Spleen (tissue), 13 donors: ENCODE measurements at regions of chr10 and their contacts with region 1.

Region 1: DNA sequence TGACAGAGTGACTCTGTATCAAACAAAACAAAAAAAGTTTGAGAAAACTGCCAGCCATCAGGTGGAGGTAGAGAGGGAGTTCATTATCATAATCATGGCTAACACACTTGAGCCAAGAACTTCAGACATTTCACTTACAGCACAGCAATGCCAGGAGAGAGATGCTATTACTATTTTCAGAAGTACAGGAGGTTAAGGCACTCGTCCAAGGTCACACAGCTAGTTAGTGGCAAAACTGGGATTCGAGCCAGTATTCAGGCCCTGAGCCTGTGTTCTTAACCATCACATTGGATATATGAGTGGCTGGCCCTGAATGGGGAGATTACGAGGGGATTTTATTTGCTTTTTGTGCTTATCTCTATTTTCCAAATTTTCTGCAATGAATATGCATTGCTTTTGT is 24.8 kb upstream of the UNC5B start:
- DNase-seq: no peak
- H3K4me3 ChIP-seq: no peak overlapping the region
- H3K27ac ChIP-seq: peak overlapping the region in 2 of 8 donors; percentile 33 to 39
- H3K4me1 ChIP-seq: peaks cover 0 to 25% (median 9%) of the 10 kb centered on the region in 6 donors
- H3K27me3 ChIP-seq: peaks cover 0 to 31% (median 0%) of the 10 kb centered on the region in 7 donors
- CTCF ChIP-seq: no peak
- POLR2A ChIP-seq: no peak

Region 2: GRCh38 chr10:71075086-71075758 is 112.4 kb before region 1 on chr10:
- intact Hi-C with region 1: loop called (anchors 10 kb)
- DNase-seq: peak; percentile 62
- H3K4me3 ChIP-seq: no peak overlapping the region
- H3K27ac ChIP-seq: no peak overlapping the region
- H3K4me1 ChIP-seq: peaks cover 0 to 4% (median 0%) of the 10 kb centered on the region in 6 donors
- H3K27me3 ChIP-seq: peaks cover 0 to 6% (median 0%) of the 10 kb centered on the region in 7 donors
- CTCF ChIP-seq: no peak
- POLR2A ChIP-seq: no peak